GM10248 (cell line): ENCODE measurements at regions of chr18 and their contacts with region 1.

Region 1: GRCh38 chr18:77102259-77103040 is 30.1 kb downstream of the MBP start:
- DNase-seq: peak; percentile 80
- CTCF ChIP-seq: no peak

Region 2: DNA sequence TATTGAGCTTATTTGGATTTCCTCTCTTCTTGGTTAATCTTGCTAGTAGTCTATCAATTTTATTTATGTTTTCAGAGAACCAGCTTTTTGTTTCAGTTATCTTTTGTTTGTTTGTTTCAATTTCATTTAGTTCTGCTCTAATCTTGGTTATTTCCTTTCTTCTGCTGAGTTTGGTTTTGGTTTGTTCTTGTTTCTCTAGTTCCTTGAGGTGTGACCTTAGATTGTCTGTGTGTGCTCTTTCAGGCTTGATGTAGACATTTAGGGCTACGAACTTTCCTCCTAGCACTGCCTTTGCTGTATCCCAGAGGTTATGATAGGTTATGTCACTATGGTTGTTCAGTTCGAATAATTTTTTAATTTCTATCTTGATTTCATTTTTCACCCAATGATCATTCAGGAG is 138.5 kb before region 1 on chr18:
- CTCF ChIA-PET with region 1: no interaction called
- POLR2A ChIA-PET with region 1: no interaction called
- DNase-seq: no peak
- CTCF ChIP-seq: no peak

Region 3: DNA sequence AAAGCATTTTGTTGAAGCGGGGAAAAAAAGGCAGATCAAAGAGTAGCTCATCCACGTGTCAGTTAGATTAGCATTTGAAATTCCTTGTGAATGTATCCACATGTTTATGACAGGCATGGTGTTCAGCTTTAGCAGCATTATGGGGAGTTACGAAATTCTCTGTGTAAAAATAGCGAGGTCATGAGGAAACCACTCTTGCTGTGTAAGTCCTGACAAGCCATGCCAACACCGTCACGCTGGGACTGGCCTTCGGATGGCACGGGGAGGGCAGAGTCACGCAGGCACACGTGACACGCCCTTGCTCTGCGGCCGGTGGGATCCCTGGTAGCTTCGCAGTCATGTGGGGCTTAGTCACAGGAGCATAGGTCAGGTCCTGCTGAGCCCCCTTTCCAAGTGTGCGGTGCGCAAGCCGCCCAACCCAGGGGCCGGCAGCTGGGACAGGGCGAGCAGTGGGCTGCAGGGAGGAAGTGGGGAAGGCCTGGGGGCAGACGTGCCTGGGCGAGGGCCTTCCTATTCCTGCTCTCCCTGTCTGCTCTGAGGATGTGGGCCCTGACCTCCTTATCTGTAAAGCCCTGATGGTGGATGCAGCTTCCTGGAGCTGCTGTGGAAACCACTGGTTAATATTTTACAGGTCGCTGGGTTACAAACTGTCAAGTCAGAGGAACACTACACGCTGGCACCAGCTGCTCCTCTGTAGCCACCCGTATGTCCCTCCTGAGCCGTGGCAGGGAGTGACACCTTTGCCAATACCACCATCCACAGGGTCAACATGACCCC is 12.2 kb after region 1 on chr18:
- CTCF ChIA-PET with region 1: interaction called, 11 read pairs
- POLR2A ChIA-PET with region 1: no interaction called
- DNase-seq: peak; percentile 59
- CTCF ChIP-seq: no peak

Region 4: DNA sequence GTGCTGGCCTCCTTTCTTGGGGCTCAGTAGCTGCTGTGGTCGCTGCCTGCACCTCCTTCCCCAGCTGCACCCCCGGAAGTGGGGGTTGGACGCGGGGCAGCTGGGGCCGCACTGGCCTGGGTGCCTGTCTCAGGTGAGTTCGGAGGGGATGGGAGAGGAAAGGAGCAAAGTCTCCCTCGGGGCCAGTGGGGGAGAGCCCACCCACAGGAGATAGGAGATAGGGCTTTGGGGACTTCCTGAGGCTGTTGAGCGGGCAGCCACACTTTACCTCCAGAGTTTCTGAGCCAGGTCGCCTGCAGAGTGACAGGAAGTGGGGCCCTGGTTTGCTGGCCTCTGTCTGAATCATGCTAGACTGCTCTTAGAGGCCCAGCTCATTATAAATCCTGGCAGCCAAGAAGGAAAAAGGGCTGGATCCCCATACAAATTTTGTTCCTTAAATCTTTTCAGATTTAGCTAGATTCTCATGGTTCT is 22.0 kb after region 1 on chr18:
- CTCF ChIA-PET with region 1: interaction called, 17 read pairs
- POLR2A ChIA-PET with region 1: interaction called, 5 read pairs
- DNase-seq: peak; percentile 67
- CTCF ChIP-seq: no peak